ENCODE measurements at regions of chr5 and their contacts with region 1.

Region 1: GRCh38 chr5:96336351-96336985 is 96.6 kb downstream of the PCSK1 start:
- DNase-seq: peak; percentile 72
- H3K4me3 ChIP-seq: no peak overlapping the region
- CTCF ChIP-seq: peak; percentile 80

Region 2: GRCh38 chr5:95846554-95847260 is 489.8 kb before region 1 on chr5:
- CTCF ChIA-PET with region 1: interaction called, 12 read pairs
- POLR2A ChIA-PET with region 1: no interaction called
- DNase-seq: no peak
- H3K4me3 ChIP-seq: no peak overlapping the region
- CTCF ChIP-seq: peak; percentile 82

Region 3: DNA sequence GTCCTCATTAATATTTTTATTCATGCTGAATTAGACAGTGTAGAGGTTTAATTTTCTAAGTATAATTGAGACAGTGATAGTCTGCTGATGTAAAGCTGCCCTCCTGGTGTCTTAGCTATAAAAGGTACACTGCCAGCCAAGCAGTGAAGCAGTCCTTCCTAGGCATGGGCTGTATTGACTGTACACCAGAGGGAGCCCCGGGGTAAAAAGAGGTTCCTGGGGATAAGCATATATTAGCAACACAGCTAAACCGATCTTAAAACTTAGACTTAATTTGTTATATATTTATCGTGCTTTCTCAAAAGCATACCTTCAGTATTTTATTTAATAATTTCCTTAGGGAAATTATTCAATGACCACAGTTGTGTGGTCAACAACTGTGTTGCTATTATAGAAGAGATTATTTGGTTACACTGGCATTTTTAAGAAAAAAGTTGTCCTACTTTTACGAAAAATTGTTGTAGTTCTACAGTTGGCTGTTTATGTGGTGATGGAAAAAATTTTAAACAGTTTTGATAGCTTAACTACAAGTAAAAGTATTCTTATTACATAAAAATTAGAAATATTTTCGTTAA is 443.6 kb before region 1 on chr5:
- CTCF ChIA-PET with region 1: interaction called, 27 read pairs
- POLR2A ChIA-PET with region 1: no interaction called
- DNase-seq: no peak
- H3K4me3 ChIP-seq: no peak overlapping the region
- CTCF ChIP-seq: peak; percentile 49

Region 4: DNA sequence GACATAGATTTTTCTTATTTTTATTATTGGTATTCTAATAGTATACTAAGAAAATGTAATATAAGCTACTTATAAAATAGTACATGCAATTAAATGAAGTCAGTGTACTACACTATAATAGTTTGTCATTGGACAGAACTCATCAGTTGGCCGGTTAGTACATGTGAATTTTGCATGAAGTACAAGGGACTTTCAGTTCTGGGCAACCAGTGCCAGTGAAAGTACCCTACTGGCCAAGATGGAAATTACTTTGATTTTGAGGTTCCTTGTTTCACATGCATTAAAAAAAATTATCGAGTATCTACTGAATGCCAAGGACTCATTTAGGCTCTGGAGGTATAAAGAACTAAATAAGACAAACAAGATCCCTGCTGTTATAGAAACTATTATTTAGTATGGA is 161.4 kb before region 1 on chr5:
- CTCF ChIA-PET with region 1: interaction called, 12 read pairs
- POLR2A ChIA-PET with region 1: no interaction called
- DNase-seq: no peak
- H3K4me3 ChIP-seq: no peak overlapping the region
- CTCF ChIP-seq: no peak

Region 5: DNA sequence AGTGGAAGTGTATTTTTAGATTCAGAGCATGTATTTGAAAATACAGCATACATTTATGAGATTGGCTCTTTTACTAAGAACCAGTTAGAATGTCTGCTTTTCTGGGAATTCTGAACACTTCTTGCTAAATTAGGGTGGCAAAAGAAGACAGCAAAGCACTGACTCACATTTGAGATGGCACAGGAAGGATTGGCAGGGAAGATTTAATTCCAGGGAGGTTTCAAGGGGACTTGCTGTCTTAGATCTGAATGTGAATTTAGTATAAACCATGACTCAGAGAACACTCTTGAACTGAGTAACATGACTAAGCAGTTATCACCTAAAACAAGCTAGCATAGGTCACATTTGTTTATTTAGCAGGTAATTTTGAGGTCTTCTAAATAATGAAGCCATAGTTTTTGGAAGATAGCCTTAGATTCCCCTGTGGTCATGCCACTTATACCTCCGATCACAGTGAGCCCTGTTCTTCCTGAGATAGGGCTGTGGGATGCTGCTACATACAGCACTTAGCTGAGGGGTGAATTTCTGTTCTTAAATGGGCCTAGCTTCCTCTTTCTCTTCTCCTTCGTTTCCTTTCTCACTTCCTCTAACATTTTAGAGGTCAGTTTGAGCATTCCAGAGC is 77.2 kb before region 1 on chr5:
- CTCF ChIA-PET with region 1: interaction called, 16 read pairs
- POLR2A ChIA-PET with region 1: interaction called, 4 read pairs
- DNase-seq: no peak
- H3K4me3 ChIP-seq: no peak overlapping the region
- CTCF ChIP-seq: no peak

Region 6: DNA sequence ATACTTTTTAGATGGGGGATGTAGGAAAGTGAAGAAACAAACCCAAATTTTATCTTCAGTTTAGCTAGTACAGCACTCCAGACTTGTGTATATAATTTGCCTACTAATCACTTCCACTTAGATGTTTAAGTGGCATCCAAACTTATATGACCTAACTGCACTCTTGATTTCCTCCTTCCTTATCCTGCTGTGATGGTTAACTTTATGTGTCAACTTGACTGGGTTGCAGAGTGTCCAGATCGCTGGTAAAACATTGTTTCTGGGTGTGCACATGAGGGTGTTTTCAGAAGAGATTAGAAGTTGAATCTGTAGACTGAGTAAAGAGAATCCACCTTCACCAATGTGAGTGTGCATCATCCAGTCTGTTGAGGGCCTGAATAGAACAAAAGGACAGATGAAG is 16.8 kb after region 1 on chr5:
- CTCF ChIA-PET with region 1: no interaction called
- POLR2A ChIA-PET with region 1: no interaction called
- DNase-seq: no peak
- H3K4me3 ChIP-seq: no peak overlapping the region
- CTCF ChIP-seq: no peak